Heart left ventricle (tissue), 16 donors: ENCODE measurements at regions of chr14 and their contacts with region 1.

Region 1: GRCh38 chr14:100239840-100240724 is 1.1 kb downstream of the YY1 start:
- DNase-seq: peak; percentile 87 to 93 (median 92)
- ATAC-seq: peak; percentile 53 to 74 (median 70)
- H3K4me3 ChIP-seq: peak overlapping the region; percentile 84 to 100 (median 99)
- H3K27ac ChIP-seq: peak overlapping the region; percentile 91 to 100 (median 99)
- H3K4me1 ChIP-seq: peaks cover 15 to 68% (median 54%) of the 10 kb centered on the region in 12 donors
- H3K27me3 ChIP-seq: no peaks in the 10 kb centered on the region
- CTCF ChIP-seq: peak; percentile 25 to 90 (median 75)
- POLR2A ChIP-seq: peak in 1 of 2 donors; percentile 63

Region 2: GRCh38 chr14:99995700-99996356 is 244.3 kb before region 1 on chr14:
- intact Hi-C with region 1: no loop called
- DNase-seq: peak in 4 of 5 donors; percentile 43 to 55 (median 51)
- ATAC-seq: peak in 3 of 4 donors; percentile 67 to 77 (median 75)
- H3K4me3 ChIP-seq: no peak overlapping the region
- H3K27ac ChIP-seq: no peak overlapping the region
- H3K4me1 ChIP-seq: peaks cover 0 to 4% (median 0%) of the 10 kb centered on the region in 12 donors
- H3K27me3 ChIP-seq: no peaks in the 10 kb centered on the region
- CTCF ChIP-seq: peak; percentile 52 to 81 (median 72)
- POLR2A ChIP-seq: no peak

Region 3: DNA sequence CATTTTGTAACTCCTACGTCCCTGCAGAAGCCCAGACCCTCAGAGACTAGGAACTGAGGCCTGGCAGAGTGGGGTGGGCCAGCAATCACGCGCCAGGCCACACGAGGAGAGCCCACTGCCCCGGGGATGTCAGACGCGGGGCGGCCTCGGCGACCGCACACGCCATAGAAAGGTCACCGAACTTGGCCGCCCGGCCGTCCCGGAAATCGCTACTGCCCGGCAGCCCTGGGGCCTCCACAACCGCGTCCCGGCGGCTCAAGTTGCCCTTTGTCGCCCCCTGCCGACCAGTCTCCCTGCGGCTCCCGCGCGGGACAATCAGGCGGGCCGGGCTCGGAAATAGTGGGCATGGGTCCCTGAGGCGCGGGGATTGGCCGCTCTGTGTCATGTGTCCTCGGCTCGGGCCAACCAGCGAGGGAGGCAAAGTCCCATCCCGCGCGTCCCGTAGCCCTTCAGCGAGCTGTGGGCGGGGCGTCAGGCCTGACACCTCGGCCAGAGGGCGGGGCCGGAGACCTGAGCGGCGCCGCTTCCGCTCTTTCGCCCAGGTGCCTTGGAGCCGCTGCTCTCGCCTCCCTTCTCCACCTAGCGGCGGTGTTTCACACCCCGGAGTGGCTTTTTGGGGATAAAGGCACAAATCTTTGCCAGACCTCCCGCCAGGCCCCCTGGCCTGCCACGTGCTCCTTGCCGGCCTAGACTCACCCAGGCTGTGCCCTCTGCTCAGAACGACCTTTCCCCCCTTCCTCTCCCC is 47.2 kb before region 1 on chr14:
- intact Hi-C with region 1: loop called in 1 of 10 experiments (anchors 2 kb)
- DNase-seq: peak; percentile 99 to 100 (median 99)
- ATAC-seq: peak; percentile 99 to 100 (median 100)
- H3K4me3 ChIP-seq: peak overlapping the region in 11 of 12 donors; percentile 16 to 63 (median 52)
- H3K27ac ChIP-seq: peak overlapping the region; percentile 80 to 97 (median 90)
- H3K4me1 ChIP-seq: peaks cover 0 to 21% (median 14%) of the 10 kb centered on the region in 12 donors
- H3K27me3 ChIP-seq: no peaks in the 10 kb centered on the region
- CTCF ChIP-seq: peak; percentile 89 to 98 (median 96)
- POLR2A ChIP-seq: peak in 1 of 2 donors; percentile 58

Region 4: DNA sequence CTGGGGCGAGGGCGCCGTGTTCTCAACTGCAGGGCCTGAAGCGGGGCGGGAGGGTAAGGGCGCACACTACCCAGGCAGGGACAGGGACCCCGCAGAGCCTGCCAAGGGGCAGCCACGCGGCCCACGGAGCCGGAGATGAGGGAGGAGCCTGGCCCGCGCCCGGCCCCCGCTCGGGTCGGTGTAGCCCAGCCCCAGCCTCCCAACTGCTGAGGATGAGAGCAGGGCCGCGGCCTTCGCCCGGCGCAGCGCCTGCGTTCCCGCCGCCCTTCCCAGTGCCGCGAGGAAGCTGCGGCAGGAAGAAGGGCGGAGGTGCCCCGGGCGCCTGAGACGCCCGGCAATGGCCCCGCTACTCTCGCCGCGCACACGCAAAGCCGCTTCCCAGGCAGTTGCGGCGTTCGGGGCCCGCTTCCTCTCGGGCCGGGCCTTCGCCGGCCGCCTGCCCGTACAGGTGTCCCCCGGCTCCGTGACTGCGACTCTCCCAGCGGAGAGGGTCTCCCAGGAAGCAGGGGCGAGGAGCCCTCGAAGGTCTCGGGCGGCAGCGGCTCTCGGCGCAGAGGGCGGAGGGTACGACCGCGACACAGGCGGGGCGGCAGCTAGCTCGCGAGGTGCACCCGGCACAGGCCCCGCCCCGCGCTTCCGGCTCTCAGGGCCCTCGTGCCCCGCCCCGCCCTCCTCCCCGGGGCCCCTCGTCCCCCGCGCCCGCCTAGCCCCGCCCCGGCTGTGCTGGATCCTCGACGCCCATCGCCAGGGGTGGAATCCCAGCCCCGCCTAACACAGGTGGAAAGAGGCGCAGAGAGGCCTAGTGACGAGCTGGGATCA is 25.9 kb before region 1 on chr14:
- intact Hi-C with region 1: loop called in 1 of 10 experiments (anchors 1 kb)
- DNase-seq: peak; percentile 88 to 95 (median 91)
- ATAC-seq: peak; percentile 86 to 99 (median 96)
- H3K4me3 ChIP-seq: peak overlapping the region; percentile 66 to 98 (median 82)
- H3K27ac ChIP-seq: peak overlapping the region; percentile 58 to 99 (median 96)
- H3K4me1 ChIP-seq: peaks cover 0 to 19% (median 10%) of the 10 kb centered on the region in 12 donors
- H3K27me3 ChIP-seq: no peaks in the 10 kb centered on the region
- CTCF ChIP-seq: no peak
- POLR2A ChIP-seq: peak in 1 of 2 donors; percentile 78

Region 5: DNA sequence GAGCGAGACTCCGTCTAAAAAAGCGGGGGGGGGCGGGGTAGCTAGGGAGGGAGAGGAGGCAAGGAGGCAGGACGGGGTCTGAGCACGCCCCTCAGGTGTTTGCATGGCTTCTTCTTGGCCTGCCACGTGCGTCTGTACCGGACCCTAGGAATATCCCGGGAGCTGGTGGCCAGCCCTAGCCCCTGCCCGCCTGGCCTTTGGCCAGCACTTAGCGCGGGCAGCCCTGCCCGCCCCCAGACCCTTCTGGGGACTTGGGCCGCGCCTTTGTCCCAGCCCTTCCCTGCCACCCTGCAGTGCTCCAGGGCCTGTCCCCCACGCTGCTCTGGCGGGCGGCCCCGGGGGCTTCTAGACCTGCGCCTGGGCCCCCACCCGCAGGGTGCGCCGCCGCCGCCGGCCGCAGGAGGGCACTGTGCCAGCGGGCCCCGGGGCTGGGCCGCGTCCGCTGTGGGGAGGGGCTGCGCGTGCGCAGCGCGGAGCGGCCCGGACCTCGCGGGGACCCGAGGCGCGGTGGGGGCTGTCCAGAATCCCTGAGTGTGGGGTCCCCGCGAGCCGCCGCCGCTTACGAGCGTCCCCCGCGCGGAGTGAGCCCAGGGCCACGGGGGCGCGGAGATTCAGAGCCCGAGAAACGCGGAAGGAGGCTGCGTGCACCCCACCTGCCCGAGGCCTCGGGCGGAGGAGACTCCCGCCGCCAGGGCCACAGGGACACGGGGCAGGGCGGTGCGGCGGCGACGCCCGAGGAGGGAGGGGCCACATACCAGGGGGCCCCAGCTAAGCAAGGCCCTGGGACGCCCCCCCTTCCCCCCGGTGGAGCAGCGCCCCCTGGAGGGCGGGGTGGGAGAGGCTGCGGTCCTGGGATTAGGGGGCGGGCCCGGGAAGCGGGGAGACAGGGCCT is 45.2 kb after region 1 on chr14:
- intact Hi-C with region 1: loop called in 2 of 10 experiments (anchors 5 kb)
- DNase-seq: peak; percentile 62 to 90 (median 80)
- ATAC-seq: peak; percentile 36 to 92 (median 82)
- H3K4me3 ChIP-seq: peak overlapping the region; percentile 60 to 98 (median 80)
- H3K27ac ChIP-seq: peak overlapping the region; percentile 59 to 94 (median 87)
- H3K4me1 ChIP-seq: peaks cover 0 to 70% (median 15%) of the 10 kb centered on the region in 12 donors
- H3K27me3 ChIP-seq: no peaks in the 10 kb centered on the region
- CTCF ChIP-seq: peak; percentile 52 to 89 (median 72)
- POLR2A ChIP-seq: peak in 1 of 2 donors; percentile 64

Region 6: DNA sequence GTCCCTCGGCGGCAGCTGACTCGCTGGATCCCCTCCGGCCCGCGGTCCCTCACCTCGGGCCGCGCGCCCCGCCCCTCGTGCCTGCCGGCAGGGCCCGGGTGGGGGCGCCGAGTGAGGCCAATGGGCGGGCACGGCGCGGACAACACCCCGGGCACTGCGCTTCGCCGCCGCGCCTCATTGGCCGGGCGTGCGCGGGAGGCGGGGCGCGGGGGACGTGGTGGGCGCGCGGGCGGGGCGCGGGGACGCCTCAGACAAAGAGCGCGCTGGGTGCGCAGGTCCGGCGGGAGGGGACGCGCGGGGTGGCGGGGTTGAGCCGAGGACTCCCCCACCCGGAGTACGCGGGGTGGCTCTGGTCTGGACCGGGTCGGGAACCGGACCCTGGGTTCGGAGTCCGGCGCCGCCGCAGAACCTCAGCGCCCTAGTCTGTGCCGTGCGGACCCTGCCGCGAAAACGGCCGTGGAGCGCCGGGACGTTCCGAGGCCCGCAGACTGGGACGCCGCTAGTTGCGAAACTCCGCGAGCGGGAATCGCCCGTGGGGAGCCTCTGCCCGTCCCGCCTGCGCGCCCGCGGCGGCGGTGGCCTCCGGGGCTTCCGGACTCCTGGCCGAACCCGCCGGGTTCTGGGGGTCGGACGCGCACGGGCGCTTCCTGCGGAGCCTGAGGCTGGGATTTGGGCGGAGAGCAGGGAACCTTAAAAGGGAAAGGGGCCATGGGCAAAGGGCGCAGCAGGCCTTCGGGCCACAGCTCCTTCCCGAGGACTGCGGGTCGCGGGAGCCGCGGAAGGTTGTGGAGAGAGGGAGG is 66.5 kb after region 1 on chr14 and contains the start of gene SLC25A29:
- intact Hi-C with region 1: loop called in 3 of 10 experiments (anchors 2 to 5 kb)
- DNase-seq: peak; percentile 90 to 94 (median 92)
- ATAC-seq: peak; percentile 68 to 94 (median 91)
- H3K4me3 ChIP-seq: peak within 1 kb of the TSS; percentile 59 to 99 (median 88)
- H3K27ac ChIP-seq: peak within 1 kb of the TSS; percentile 82 to 95 (median 90)
- H3K4me1 ChIP-seq: peaks cover 0 to 61% (median 29%) of the 10 kb centered on the region in 12 donors
- H3K27me3 ChIP-seq: no peaks in the 10 kb centered on the region
- CTCF ChIP-seq: no peak
- POLR2A ChIP-seq: peak; percentile 3 to 84
- total RNA-seq, gene SLC25A29: 10.2 to 34.2 (median 20.1) TPM